WTC11 (cell line): ENCODE measurements at regions of chr1 and their contacts with region 1.

Region 1: DNA sequence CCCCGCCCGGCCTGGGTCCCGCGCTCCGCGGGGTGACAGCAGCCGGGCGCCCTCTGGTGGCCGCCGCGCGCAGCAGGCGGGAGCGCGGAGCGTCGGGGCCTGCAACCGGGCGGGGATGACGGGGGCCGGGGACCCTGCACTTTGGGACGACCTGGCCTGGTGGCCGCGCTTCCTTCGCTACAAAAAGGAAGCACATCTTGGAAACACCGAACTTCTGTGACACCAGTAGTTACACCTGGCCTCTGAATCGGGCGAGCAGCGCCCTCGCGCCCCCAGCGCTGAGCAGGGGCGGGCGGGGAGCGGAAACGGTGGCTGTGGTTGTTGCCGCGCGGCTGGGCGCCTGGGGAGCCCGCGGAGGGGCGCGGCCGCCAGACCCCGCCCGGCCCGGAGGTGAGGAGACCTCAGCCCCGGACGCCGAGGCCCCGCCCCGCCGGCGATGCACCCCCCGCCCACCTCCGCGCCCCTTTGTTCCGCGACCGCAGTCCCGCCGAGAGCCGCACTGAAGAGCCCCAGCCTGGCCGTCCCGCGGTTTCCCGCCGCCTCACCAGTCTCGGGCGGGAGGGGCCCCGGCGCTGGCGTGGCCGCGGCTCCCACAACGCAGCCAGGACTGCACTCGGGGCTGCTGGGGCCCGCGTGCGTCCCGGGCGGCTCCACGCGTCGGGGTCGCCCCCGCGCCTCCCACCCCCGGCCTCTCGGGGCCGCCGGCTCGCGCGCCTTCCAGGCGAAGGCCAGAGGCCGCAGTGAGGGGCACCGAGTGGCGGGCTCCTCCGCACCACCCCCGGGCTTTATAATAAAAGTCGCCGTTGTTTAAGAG is 59.3 kb downstream of the H3-3A start:
- DNase-seq: peak; percentile 89
- ATAC-seq: peak; percentile 74
- H3K4me3 Mint-ChIP-seq: peak overlapping the region; percentile 83
- H3K27ac Mint-ChIP-seq: no peak overlapping the region
- H3K4me1 Mint-ChIP-seq: peaks cover 49% of the 10 kb centered on the region
- H3K27me3 Mint-ChIP-seq: peaks cover 20% of the 10 kb centered on the region
- CTCF ChIP-seq: peak; percentile 93

Region 2: GRCh38 chr1:226083302-226084101 is 38.3 kb before region 1 on chr1:
- CTCF ChIA-PET with region 1: interaction called, 31 read pairs
- POLR2A ChIA-PET with region 1: no interaction called
- DNase-seq: peak; percentile 93
- ATAC-seq: peak; percentile 83
- H3K4me3 Mint-ChIP-seq: peak overlapping the region; percentile 85
- H3K27ac Mint-ChIP-seq: no peak overlapping the region
- H3K4me1 Mint-ChIP-seq: peaks cover 6% of the 10 kb centered on the region
- H3K27me3 Mint-ChIP-seq: peaks cover 59% of the 10 kb centered on the region
- CTCF ChIP-seq: no peak

Region 3: DNA sequence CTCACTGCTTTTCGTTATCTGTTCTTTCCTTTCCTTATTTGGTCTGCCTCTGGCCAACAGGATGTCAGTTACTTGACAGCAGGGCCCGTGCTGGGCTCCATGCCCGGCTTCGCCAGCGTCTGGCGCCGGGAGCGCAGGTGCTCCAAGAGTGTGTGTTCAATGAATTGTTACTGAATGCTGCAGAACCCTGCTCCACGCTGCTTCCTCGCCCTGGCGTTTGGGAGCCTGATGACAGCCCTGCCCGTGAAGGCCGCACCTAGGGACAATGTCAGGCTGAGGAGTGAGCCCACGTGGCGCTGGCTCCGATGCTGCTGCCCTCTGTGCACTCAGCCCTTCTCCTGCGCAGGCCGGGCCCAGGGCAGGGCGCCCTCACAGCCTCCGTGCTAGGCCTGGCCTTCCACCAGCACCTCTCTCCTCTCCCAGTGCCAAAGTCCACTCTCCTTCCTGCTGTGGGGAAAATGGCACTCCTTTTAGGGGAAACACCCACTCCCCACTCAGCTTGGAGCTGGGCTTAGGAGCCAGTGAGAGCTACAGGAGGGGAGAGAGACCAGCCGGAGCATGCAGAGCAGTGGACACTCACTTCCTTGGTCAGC is 13.4 kb after region 1 on chr1:
- CTCF ChIA-PET with region 1: interaction called, 33 read pairs
- POLR2A ChIA-PET with region 1: no interaction called
- DNase-seq: no peak
- ATAC-seq: peak; percentile 31
- H3K4me3 Mint-ChIP-seq: no peak overlapping the region
- H3K27ac Mint-ChIP-seq: no peak overlapping the region; the same call in 1 of the 2 replicates
- H3K4me1 Mint-ChIP-seq: peaks cover 27% of the 10 kb centered on the region
- H3K27me3 Mint-ChIP-seq: no peaks in the 10 kb centered on the region
- CTCF ChIP-seq: no peak

Region 4: GRCh38 chr1:226186124-226187018 is 64.6 kb after region 1 on chr1 and contains the start of gene ACBD3:
- CTCF ChIA-PET with region 1: interaction called, 18 read pairs
- POLR2A ChIA-PET with region 1: no interaction called
- DNase-seq: peak; percentile 82
- ATAC-seq: peak; percentile 93
- H3K4me3 Mint-ChIP-seq: peak within 1 kb of the TSS; percentile 97
- H3K27ac Mint-ChIP-seq: peak within 1 kb of the TSS; percentile 97
- H3K4me1 Mint-ChIP-seq: peaks cover 23% of the 10 kb centered on the region
- H3K27me3 Mint-ChIP-seq: no peaks in the 10 kb centered on the region
- CTCF ChIP-seq: no peak
- total RNA-seq, gene ACBD3: 30.5 to 38.9 TPM (median 31.1 TPM) in 3 replicates

Region 5: GRCh38 chr1:226209307-226210059 is 87.7 kb after region 1 on chr1:
- CTCF ChIA-PET with region 1: interaction called, 17 read pairs
- POLR2A ChIA-PET with region 1: no interaction called
- DNase-seq: no peak
- ATAC-seq: no peak; the same call in 1 of the 2 replicates
- H3K4me3 Mint-ChIP-seq: no peak overlapping the region
- H3K27ac Mint-ChIP-seq: peak overlapping the region; percentile 64
- H3K4me1 Mint-ChIP-seq: peaks cover 40% of the 10 kb centered on the region
- H3K27me3 Mint-ChIP-seq: peaks cover 4% of the 10 kb centered on the region
- CTCF ChIP-seq: no peak

Region 6: DNA sequence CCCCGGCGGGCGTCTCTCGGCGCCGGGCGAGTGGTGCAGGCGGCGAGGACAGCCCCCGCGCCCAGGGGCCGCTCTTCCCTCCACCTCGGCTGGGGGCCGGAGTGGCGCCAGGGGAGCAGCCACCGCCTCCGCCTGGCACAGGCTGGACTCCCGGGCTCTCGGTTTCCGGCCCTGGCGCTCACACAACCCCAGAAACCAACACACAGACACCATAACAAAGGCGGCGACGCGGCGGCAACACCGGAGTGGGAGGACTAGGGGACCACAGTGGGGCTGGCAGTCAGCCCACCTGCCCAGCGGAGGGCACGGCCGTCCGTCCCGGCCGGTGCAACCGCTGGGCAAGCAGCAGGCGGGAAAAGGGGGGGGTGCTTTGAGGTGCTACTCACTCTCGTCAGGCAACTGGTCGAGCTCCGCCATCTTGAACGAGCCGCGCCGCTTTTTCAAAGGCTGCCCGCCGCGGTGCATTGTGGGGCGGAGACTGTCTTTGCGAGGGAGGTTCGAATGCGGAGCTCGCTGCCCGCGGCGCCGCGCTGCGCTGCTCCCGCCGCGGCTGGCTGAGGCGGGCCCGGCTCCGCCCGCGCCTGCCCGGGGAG is 187.0 kb after region 1 on chr1 and contains the start of gene LIN9:
- CTCF ChIA-PET with region 1: interaction called, 10 read pairs
- POLR2A ChIA-PET with region 1: interaction called, 3 read pairs
- DNase-seq: peak; percentile 95
- ATAC-seq: peak; percentile 77
- H3K4me3 Mint-ChIP-seq: peak within 1 kb of the TSS; percentile 84
- H3K27ac Mint-ChIP-seq: peak within 1 kb of the TSS; percentile 72
- H3K4me1 Mint-ChIP-seq: peaks cover 39% of the 10 kb centered on the region
- H3K27me3 Mint-ChIP-seq: peaks cover 22% of the 10 kb centered on the region
- CTCF ChIP-seq: no peak
- total RNA-seq, gene LIN9: 10.4 to 15.7 TPM (median 10.7 TPM) in 3 replicates

Region 7: DNA sequence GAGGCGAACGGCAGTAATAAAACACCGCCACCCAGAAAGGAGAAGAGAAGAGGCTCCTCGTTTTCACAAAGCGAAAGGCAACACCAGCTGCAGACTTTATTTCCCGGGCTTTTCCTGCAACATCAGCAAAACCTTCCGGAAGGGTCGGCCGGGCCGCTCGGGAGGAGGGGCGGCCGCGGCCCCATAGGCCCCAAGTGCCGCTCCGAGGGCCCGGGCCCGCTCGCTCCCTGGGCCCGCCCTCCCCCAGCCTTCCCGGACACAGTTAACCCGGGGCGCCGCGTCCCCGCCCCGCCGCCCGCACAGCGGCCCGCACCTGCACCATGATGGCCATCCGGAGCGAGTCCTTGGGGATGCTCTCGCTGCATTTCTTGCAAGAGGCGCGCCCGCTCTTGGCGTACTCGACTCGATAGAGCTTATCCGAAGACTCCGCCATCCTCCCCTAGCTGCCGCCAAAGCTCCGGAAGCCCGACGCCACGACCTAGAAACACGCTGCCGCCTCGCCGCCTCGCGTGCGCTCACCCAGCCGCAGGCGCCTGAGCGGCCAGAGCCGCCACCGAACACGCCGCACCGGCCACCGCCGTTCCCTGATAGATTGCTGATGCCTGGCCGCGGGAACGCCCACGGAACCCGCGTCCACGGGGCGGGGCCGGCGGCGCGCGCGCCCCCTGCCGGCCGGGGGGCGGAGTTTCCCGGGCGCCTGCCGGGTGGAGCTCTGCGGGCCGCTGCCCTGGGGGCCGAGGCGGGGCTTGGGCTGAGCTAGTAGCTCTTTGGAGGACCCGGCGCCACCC is 285.9 kb after region 1 on chr1 and contains the start of gene PARP1:
- CTCF ChIA-PET with region 1: interaction called, 11 read pairs
- POLR2A ChIA-PET with region 1: no interaction called
- DNase-seq: peak; percentile 82
- ATAC-seq: peak; percentile 71
- H3K4me3 Mint-ChIP-seq: peak within 1 kb of the TSS; percentile 99
- H3K27ac Mint-ChIP-seq: peak within 1 kb of the TSS; percentile 99
- H3K4me1 Mint-ChIP-seq: peaks cover 43% of the 10 kb centered on the region
- H3K27me3 Mint-ChIP-seq: no peaks in the 10 kb centered on the region
- CTCF ChIP-seq: peak; percentile 86
- total RNA-seq, gene PARP1: 366 to 376 TPM (median 371 TPM) in 3 replicates